ENCODE measurements at regions of chr1 and their contacts with region 1.

Region 1: GRCh38 chr1:205485338-205486228 is 18.9 kb upstream of the CDK18 start:
- DNase-seq: peak; percentile 88
- H3K4me3 Mint-ChIP-seq: no peak overlapping the region
- H3K27ac Mint-ChIP-seq: no peak overlapping the region
- H3K4me1 Mint-ChIP-seq: peaks cover 14% of the 10 kb centered on the region
- H3K27me3 Mint-ChIP-seq: peaks cover 42% of the 10 kb centered on the region
- CTCF ChIP-seq: peak; percentile 100

Region 2: DNA sequence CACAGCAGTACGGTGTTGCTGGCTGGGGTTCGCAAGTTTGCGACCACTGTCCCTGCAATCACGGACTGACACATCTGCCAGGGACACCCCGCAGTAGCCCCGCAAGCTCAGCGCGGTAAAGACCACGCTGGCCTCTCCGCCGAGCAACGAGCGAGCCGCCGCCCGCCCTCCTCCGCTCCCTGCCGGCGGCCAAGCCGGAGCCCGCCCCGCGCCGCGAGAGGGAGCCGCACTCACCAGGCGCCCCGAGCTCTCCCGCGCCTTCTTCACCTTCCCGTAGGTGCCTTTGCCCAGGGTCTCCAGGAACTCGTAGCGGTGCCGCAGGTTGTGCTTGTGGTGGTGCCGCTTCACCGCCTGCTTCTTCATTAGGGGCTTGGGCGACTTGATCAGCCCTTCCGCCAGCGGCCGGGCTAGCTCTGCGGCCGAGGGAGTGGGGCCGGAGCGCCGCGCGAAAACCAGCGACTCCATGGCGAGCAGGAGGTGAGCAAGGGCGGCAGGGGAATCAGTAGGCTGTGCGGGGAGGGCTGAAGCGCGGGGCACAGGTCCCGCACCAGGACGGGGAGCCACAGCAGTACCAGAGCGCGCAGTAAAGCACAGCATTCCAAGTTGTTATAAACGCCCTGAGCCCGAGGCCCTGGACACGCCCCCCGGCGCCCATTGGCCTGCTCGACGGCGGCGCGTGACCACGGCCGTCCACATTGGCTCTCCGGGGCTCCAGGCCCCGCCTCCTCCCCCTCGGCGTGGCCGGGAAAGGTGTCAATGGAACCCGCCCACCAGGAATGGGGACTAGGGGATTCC is 164.2 kb before region 1 on chr1 and contains the start of gene NUAK2:
- CTCF ChIA-PET with region 1: interaction called, 141 read pairs
- POLR2A ChIA-PET with region 1: interaction called, 3 read pairs
- intact Hi-C with region 1: no loop called
- DNase-seq: peak; percentile 97
- H3K4me3 Mint-ChIP-seq: peak within 1 kb of the TSS; percentile 99
- H3K27ac Mint-ChIP-seq: peak within 1 kb of the TSS; percentile 54
- H3K4me1 Mint-ChIP-seq: peaks cover 56% of the 10 kb centered on the region
- H3K27me3 Mint-ChIP-seq: no peaks in the 10 kb centered on the region
- CTCF ChIP-seq: peak; percentile 64
- total RNA-seq, gene NUAK2: 2.8 and 6.0 TPM in 2 replicates

Region 3: DNA sequence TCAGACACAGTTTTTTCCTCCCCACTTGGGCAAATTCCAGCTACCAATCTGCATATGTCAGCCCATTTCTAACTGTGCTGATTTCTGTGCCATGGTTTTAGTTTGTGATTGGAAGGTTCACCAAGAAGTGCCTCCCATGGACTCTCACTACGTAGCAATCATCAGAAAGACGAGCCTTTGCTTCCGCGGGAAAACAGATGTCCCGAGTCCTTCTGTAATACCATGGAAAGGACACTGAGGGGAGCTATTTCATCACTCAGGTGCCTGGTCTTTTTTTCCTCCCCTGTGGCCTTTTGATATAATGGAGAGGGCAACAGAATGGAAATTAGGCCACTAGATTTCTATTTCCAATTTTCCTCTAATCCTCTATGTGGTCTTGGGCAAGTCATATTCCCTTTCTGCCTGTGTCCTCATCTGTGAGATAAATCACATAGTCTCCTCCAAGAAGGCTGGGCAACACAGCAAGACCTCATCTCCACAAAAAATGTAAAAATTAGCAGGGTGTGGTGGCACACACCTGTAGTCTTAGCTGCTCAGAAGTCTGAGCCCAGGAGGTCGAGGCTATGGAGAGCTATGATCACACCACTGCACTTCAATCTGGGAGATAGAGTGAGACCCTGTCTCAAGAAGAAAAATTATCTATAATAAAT is 88.5 kb before region 1 on chr1:
- CTCF ChIA-PET with region 1: interaction called, 207 read pairs
- POLR2A ChIA-PET with region 1: interaction called, 13 read pairs
- intact Hi-C with region 1: loop called (anchors 1 kb)
- DNase-seq: peak; percentile 87
- H3K4me3 Mint-ChIP-seq: no peak overlapping the region
- H3K27ac Mint-ChIP-seq: no peak overlapping the region
- H3K4me1 Mint-ChIP-seq: peaks cover 4% of the 10 kb centered on the region
- H3K27me3 Mint-ChIP-seq: peaks cover 27% of the 10 kb centered on the region
- CTCF ChIP-seq: peak; percentile 99

Region 4: GRCh38 chr1:205430696-205431305 is 54.8 kb before region 1 on chr1:
- CTCF ChIA-PET with region 1: interaction called, 296 read pairs
- POLR2A ChIA-PET with region 1: interaction called, 7 read pairs
- intact Hi-C with region 1: no loop called
- DNase-seq: peak; percentile 50
- H3K4me3 Mint-ChIP-seq: peak overlapping the region; percentile 56
- H3K27ac Mint-ChIP-seq: no peak overlapping the region
- H3K4me1 Mint-ChIP-seq: no peaks in the 10 kb centered on the region
- H3K27me3 Mint-ChIP-seq: peaks cover 56% of the 10 kb centered on the region
- CTCF ChIP-seq: peak; percentile 89

Region 5: DNA sequence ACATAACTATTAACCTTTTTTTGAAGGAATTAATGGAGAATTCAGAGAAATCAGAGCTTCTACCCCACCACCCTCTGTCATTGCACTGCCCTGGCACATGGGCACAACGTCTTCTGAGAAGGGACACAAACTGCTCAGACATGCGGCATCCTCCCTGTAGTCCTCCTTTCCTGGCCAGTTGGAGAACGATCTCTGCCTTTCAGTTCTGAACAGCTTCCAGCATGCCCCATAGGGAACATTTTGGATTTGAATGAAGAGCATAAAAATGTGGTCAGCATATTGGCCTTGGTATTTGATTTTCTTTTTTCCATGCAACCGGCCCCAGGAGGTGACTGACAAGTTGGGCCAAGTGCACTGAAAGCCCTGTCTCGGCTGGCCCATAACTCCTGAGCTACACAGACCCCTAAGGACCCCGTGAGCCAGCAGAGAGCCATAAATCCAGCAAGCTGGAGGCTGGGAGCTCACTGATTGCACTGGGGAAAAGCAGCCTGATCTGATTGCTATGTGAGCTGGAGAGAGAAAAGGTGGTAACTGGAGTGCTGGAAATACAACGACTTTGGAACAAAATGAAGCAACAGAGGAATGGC is 18.9 kb before region 1 on chr1:
- CTCF ChIA-PET with region 1: interaction called, 21 read pairs
- POLR2A ChIA-PET with region 1: no interaction called
- intact Hi-C with region 1: no loop called
- DNase-seq: no peak
- H3K4me3 Mint-ChIP-seq: no peak overlapping the region
- H3K27ac Mint-ChIP-seq: no peak overlapping the region
- H3K4me1 Mint-ChIP-seq: no peaks in the 10 kb centered on the region
- H3K27me3 Mint-ChIP-seq: peaks cover 30% of the 10 kb centered on the region
- CTCF ChIP-seq: no peak

Region 6: DNA sequence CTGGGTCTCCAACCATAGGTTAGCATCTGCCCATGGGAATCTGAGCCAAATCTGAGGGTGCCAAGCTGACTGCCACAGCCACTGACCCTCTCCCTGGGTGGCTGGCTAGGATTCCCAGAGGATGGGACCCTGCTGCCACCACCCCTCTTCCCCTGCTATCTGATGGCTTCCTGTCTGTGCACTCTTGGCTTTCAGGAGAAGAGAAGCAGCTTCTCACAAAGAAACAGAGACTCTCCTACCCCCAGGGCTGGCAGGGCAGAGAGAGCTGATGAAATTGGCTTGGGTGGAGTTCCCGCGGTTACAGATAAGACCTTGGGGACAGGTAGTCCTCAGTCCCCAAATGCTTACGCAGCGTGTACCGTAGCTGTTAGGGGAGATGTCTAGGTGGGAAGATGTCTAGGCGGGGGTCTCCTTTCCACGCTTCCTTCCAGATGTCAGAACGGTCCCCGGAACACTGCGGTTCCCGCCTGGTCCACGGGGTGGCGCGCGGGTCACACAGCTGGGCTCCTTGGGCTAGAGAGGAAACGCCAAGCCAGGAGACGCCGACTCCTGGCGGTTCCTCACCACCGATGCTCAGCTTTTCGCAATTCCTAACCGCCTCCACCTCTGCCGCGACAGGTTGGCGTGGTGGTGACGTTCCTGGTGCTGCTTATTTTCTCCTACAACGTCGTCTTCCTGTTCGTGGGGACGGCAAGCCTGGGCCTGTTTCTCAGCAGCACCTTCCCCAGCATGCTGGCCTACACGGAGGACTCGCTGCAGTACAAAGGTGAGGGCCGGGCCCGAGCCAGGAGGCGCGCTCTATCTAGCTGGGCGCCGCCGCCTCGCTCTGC is 106.2 kb after region 1 on chr1:
- CTCF ChIA-PET with region 1: interaction called, 13 read pairs
- POLR2A ChIA-PET with region 1: no interaction called
- intact Hi-C with region 1: no loop called
- DNase-seq: peak; percentile 99
- H3K4me3 Mint-ChIP-seq: peak overlapping the region; percentile 64
- H3K27ac Mint-ChIP-seq: peak overlapping the region; percentile 39
- H3K4me1 Mint-ChIP-seq: peaks cover 18% of the 10 kb centered on the region
- H3K27me3 Mint-ChIP-seq: no peaks in the 10 kb centered on the region
- CTCF ChIP-seq: peak; percentile 100